PC-3 (cell line): ENCODE measurements at regions of chr3 and their contacts with region 1.

Region 1: GRCh38 chr3:79032686-79033318 is 735.0 kb downstream of the ROBO1 start:
- DNase-seq: peak; percentile 86
- ATAC-seq: peak; percentile 61
- H3K4me3 ChIP-seq: no peak overlapping the region
- H3K27ac ChIP-seq: no peak overlapping the region
- H3K4me1 ChIP-seq: peaks cover 6% of the 10 kb centered on the region; the same call in 1 of the 2 replicates
- H3K27me3 ChIP-seq: no peaks in the 10 kb centered on the region
- CTCF ChIP-seq: peak; percentile 87

Region 2: DNA sequence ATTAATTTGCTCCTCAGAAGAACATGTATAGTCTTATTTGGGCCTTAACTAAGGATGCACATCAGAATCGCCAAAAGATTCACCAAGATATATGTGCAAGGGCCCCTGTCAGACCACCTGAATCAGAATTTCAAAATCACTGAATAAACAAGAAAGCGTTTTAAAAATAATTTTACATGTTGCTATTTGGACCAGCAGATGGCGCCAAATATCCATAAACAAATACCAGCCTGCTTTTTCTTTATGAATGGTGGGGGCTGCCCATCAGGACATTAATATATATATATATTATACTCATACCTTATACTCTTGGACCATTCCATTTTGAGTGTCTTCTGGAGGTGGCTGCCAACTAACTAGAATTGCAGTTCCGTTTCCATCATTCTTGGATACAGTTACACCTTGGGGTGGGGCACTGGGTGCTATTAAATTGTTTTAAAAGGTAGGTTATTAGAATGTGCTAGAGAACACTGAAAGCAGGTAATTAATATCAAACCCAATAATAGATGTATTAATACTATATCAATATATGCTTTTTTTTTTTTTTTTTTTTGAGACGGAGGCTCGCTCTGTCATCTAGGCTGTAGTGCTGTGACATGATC is 373.3 kb before region 1 on chr3:
- CTCF ChIA-PET with region 1: no interaction called
- POLR2A ChIA-PET with region 1: no interaction called
- intact Hi-C with region 1: loop called (anchors 1 kb)
- DNase-seq: peak; percentile 76
- ATAC-seq: no peak
- H3K4me3 ChIP-seq: no peak overlapping the region
- H3K27ac ChIP-seq: no peak overlapping the region
- H3K4me1 ChIP-seq: no peaks in the 10 kb centered on the region
- H3K27me3 ChIP-seq: no peaks in the 10 kb centered on the region
- CTCF ChIP-seq: peak; percentile 79

Region 3: DNA sequence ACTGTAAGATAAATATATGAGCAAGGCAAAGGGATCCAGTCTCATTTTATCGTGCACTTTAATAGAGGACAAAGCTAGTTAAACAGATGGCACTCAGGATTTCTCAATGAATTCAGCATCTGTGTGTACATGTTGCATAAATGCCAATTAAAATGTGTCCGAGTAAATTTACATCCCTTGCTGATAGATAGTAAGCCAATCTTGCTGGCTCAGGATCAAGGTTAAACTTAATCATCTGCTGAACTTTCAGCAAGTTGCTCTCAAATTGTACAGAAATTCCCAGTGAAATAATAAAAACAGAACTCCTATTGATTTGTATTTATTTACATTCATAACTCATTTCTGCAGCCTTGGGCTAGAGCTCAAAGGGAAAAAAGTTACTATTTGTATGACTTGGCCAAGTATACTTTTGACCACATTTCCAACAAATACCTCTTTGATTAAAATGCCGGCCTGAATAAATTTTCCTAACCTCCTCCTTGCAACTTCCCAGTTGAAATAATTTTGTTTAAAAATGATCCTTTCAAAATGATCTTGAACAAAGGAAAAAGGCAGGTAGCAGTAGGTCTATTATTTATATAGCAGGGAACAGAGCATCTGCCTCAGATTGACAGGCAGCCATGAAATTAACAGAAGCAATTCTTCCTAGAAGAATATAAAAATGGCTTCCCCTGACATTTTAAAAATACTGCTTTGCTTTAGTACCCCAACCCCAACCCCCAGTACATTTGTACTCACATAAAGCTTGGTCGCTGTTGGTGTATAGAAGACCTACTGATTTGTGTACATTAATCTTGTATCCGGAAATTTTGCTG is 266.9 kb before region 1 on chr3:
- CTCF ChIA-PET with region 1: no interaction called
- POLR2A ChIA-PET with region 1: no interaction called
- intact Hi-C with region 1: loop called (anchors 5 kb)
- DNase-seq: peak; percentile 50
- ATAC-seq: peak; percentile 83
- H3K4me3 ChIP-seq: peak overlapping the region; percentile 34
- H3K27ac ChIP-seq: peak overlapping the region; percentile 30; the same call in 1 of the 2 replicates
- H3K4me1 ChIP-seq: peaks cover 19% of the 10 kb centered on the region
- H3K27me3 ChIP-seq: no peaks in the 10 kb centered on the region
- CTCF ChIP-seq: no peak

Region 4: DNA sequence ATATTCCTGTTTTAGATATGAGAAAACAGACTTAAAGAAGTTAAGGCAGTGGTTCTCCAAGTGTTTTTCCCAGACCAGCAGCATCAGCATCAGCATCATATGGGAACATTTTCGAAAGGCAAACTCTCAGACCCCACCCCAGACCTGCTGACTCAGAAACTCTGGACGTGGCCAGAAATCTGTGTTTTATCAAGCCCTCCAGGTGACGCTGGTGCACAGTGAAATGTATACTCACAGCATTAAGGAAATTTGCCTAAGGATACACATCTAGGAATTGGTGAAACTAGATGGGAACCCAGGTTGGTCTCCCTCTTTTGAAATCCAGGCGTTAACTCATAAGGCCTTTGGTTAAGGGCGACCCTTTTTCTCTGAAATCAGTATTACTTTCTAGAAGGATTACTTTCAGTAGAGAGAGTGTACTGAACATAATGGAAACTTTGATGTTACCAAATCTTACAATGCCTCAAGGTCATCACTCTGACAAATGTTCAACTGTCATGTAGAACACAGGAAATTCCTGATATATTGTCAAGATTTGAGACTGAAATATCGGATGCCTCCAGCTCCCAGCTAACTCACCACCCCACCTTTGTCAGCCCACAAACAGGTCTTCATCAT is 175.2 kb before region 1 on chr3:
- CTCF ChIA-PET with region 1: no interaction called
- POLR2A ChIA-PET with region 1: no interaction called
- intact Hi-C with region 1: loop called (anchors 2 kb)
- DNase-seq: peak; percentile 63
- ATAC-seq: peak; percentile 88
- H3K4me3 ChIP-seq: no peak overlapping the region
- H3K27ac ChIP-seq: no peak overlapping the region
- H3K4me1 ChIP-seq: no peaks in the 10 kb centered on the region
- H3K27me3 ChIP-seq: no peaks in the 10 kb centered on the region
- CTCF ChIP-seq: peak; percentile 80

Region 5: GRCh38 chr3:78994174-78995027 is 38.4 kb before region 1 on chr3:
- CTCF ChIA-PET with region 1: no interaction called
- POLR2A ChIA-PET with region 1: no interaction called
- intact Hi-C with region 1: loop called (anchors 5 kb)
- DNase-seq: peak; percentile 34
- ATAC-seq: peak; percentile 71
- H3K4me3 ChIP-seq: no peak overlapping the region
- H3K27ac ChIP-seq: peak overlapping the region; percentile 37
- H3K4me1 ChIP-seq: peaks cover 28% of the 10 kb centered on the region
- H3K27me3 ChIP-seq: no peaks in the 10 kb centered on the region
- CTCF ChIP-seq: no peak

Region 6: DNA sequence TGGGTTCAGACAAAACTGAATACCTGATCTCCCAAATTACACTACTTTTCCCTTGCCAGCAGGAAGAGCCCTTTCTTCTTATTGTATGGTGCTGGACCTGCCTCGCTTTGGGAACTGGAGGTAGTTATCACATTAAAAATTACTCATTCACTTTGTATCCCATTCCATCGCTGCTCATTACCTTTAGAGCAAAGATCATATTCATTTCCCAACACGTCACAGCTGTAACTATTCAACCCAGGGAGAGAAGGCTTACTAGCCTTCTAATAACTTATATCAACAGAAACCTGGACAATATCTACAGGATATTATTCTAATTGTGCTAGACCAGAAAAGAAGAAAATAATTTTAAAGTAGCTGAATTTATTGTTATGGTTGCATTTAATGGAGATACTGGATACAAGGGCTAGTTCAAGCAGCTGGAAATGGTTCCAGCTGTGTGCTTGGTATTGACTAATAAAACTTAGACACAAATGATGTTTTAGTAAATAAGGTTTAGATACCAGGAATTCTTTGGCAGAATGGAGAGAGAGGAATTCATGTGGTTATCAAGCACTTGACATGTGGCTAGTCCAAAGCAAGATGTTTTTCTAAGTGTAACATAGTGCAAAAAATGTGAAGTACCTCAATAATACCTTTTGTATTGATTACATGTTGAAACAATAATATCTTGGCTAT is 78.7 kb after region 1 on chr3:
- CTCF ChIA-PET with region 1: no interaction called
- POLR2A ChIA-PET with region 1: no interaction called
- intact Hi-C with region 1: no loop called
- DNase-seq: no peak
- ATAC-seq: no peak
- H3K4me3 ChIP-seq: no peak overlapping the region
- H3K27ac ChIP-seq: no peak overlapping the region
- H3K4me1 ChIP-seq: no peaks in the 10 kb centered on the region; the same call in 1 of the 2 replicates
- H3K27me3 ChIP-seq: no peaks in the 10 kb centered on the region
- CTCF ChIP-seq: no peak